Activated CD4-positive, alpha-beta T cell treated with anti-CD3 and anti-CD28 coated beads for 36 hours (primary cell): ENCODE measurements at regions of chr20 and their contacts with region 1.

Region 1: DNA sequence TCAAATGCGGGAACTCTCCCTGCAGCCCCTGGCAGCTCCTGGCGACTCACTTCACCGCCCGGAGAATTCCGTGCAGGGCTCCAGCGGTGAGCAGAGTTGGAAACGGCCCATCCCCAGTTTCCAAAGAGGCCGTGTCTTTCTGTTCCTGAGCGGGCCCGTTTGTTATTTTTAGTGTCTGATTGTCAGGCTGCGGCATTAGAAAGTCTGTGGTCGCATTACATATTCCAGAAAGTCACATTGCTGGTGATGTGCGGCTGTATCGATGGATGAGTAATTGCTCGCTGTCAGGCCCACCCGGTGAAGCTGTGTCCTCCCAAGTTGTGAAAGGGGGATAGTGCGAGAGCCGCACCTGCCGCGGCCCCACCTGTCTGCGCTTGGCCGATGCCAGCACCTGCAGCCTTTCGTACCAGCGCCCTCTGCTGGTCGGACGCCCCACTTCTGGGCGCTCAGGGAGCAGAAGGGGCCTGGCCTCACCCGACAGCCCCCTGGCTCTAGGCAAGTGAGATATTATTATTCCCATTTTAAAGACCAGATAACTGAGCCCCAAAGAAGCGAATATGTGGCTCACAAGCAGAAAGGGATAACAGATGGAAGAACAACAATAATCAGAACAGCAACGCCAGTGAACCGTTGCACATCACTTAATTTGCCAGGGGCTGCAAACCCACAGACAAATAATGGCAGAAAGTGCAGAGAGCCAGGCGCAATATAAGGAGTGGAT is 244.9 kb downstream of the TSHZ2 start:
- DNase-seq: peak; percentile 89
- ATAC-seq: peak; percentile 55
- H3K4me3 Mint-ChIP-seq: peak overlapping the region; percentile 36
- H3K27ac Mint-ChIP-seq: peak overlapping the region; percentile 84
- H3K4me1 Mint-ChIP-seq: peaks cover 54% of the 10 kb centered on the region
- H3K27me3 Mint-ChIP-seq: no peaks in the 10 kb centered on the region

Region 2: DNA sequence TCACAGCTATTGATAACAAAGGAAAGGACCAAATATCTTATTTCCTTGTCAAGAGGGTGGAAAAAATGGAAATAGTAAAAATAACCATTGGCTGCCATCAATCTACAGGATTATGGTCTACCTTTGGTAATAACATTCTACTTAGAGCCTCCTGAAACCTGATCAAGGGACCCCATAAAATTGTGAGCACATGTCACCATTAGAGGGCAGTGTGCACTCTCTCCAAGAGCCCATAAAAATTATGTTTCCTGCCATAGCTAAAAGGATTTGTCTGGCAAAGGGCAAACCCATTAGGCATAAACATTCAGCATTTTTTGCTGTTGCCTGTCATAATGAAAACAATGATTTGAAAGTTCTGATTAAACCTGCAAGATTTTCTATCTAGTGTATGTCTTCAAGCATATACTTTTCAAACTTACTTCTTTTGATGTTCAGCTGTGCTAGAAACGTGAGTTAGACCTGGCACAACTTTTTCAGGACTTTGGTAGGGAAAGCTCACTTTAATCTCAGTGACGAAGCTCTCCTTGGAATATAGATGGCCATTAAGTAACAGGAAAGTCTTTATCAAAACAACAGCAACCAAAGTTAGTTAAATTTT is 904.8 kb before region 1 on chr20:
- CTCF ChIA-PET with region 1: no interaction called
- POLR2A ChIA-PET with region 1: no interaction called
- intact Hi-C with region 1: loop called (anchors 1 to 10 kb)
- DNase-seq: peak; percentile 68
- ATAC-seq: peak; percentile 82
- H3K4me3 Mint-ChIP-seq: no peak overlapping the region
- H3K27ac Mint-ChIP-seq: no peak overlapping the region
- H3K4me1 Mint-ChIP-seq: peaks cover 20% of the 10 kb centered on the region
- H3K27me3 Mint-ChIP-seq: peaks cover 1% of the 10 kb centered on the region

Region 3: GRCh38 chr20:52494244-52494643 is 722.8 kb before region 1 on chr20:
- CTCF ChIA-PET with region 1: no interaction called
- POLR2A ChIA-PET with region 1: no interaction called
- intact Hi-C with region 1: loop called in 1 of 2 experiments (anchors 5 kb)
- DNase-seq: peak; percentile 80
- ATAC-seq: peak; percentile 98
- H3K4me3 Mint-ChIP-seq: peak overlapping the region; percentile 9
- H3K27ac Mint-ChIP-seq: peak overlapping the region; percentile 40
- H3K4me1 Mint-ChIP-seq: peaks cover 18% of the 10 kb centered on the region
- H3K27me3 Mint-ChIP-seq: no peaks in the 10 kb centered on the region

Region 4: GRCh38 chr20:53021934-53022333 is 195.1 kb before region 1 on chr20:
- CTCF ChIA-PET with region 1: no interaction called
- POLR2A ChIA-PET with region 1: interaction called, 6 read pairs
- intact Hi-C with region 1: loop called in 1 of 2 experiments (anchors 2 kb)
- DNase-seq: peak; percentile 22
- ATAC-seq: peak; percentile 84
- H3K4me3 Mint-ChIP-seq: peak overlapping the region; percentile 41
- H3K27ac Mint-ChIP-seq: peak overlapping the region; percentile 97
- H3K4me1 Mint-ChIP-seq: peaks cover 78% of the 10 kb centered on the region
- H3K27me3 Mint-ChIP-seq: no peaks in the 10 kb centered on the region

Region 5: DNA sequence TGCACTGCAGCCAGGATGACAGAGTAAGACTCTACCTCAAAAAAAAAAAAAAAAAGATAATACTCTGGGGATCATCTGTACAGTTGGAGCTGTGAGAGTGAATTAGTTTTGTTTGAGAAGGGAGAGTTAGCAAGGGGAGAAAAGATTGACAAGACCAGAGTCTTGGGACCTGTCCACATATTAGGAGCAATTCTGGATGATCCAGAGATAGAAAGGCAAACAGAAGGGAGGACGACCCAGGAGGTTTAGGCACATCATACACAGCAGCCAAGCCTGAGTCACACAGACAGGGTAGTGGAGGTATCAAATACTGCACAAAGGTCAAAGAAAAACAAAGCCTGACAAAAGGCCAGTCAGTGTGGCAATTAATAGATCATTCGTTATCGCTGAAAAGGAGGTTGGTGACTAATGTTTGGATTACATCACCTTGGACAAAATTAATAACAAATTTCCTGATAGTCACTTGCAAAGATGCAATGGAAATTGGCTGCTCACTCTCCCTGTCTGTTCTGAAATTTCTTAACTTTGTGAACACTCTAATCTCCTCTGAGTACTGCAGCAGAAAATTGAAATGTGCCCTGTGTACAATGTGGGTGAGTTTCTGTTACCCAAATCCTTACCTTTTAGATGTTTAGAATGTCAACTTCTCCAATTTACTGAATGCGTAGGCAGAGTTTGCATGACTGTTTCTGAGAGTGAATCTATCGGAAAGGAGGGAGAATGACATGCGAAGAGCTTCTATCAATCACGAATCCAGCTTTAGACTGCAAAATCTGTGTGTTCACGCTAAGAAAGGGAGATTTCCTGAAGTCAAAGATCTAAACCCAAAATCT is 139.4 kb before region 1 on chr20:
- CTCF ChIA-PET with region 1: interaction called, 3 read pairs
- POLR2A ChIA-PET with region 1: no interaction called
- intact Hi-C with region 1: loop called (anchors 2 to 5 kb)
- DNase-seq: peak; percentile 56
- ATAC-seq: peak; percentile 80
- H3K4me3 Mint-ChIP-seq: no peak overlapping the region
- H3K27ac Mint-ChIP-seq: no peak overlapping the region
- H3K4me1 Mint-ChIP-seq: peaks cover 44% of the 10 kb centered on the region
- H3K27me3 Mint-ChIP-seq: peaks cover 3% of the 10 kb centered on the region

Region 6: GRCh38 chr20:53245574-53245973 is 28.6 kb after region 1 on chr20:
- CTCF ChIA-PET with region 1: no interaction called
- POLR2A ChIA-PET with region 1: no interaction called
- intact Hi-C with region 1: no loop called
- DNase-seq: no peak
- ATAC-seq: no peak
- H3K4me3 Mint-ChIP-seq: no peak overlapping the region
- H3K27ac Mint-ChIP-seq: no peak overlapping the region
- H3K4me1 Mint-ChIP-seq: peaks cover 12% of the 10 kb centered on the region
- H3K27me3 Mint-ChIP-seq: peaks cover 3% of the 10 kb centered on the region